IMR-90 (cell line): ENCODE measurements at regions of chr10 and their contacts with region 1.

Region 1: GRCh38 chr10:94292434-94293090 is 70.2 kb downstream of the NOC3L start:
- DNase-seq: peak; percentile 73
- ATAC-seq: peak; percentile 72
- H3K4me3 ChIP-seq: no peak overlapping the region
- H3K27ac ChIP-seq: no peak overlapping the region
- H3K4me1 ChIP-seq: peaks cover 5% of the 10 kb centered on the region; the same call in 1 of the 2 replicates
- H3K27me3 ChIP-seq: no peaks in the 10 kb centered on the region
- CTCF ChIP-seq: no peak
- POLR2A ChIP-seq: no peak
- RAD21 ChIP-seq: no peak

Region 2: GRCh38 chr10:94225589-94225988 is 67.0 kb before region 1 on chr10:
- CTCF ChIA-PET with region 1: no interaction called
- POLR2A ChIA-PET with region 1: no interaction called
- dilution Hi-C with region 1: no loop called
- in situ Hi-C with region 1: no loop called
- intact Hi-C with region 1: loop called (anchors 2 kb)
- DNase-seq: no peak
- ATAC-seq: no peak
- H3K4me3 ChIP-seq: no peak overlapping the region
- H3K27ac ChIP-seq: no peak overlapping the region
- H3K4me1 ChIP-seq: peaks cover 2% of the 10 kb centered on the region
- H3K27me3 ChIP-seq: no peaks in the 10 kb centered on the region
- CTCF ChIP-seq: peak; percentile 31; the same call in 1 of the 2 replicates
- POLR2A ChIP-seq: no peak
- RAD21 ChIP-seq: peak; percentile 42; the same call in 1 of the 2 replicates